Ovary (tissue), 10 donors: ENCODE measurements at regions of chr4 and their contacts with region 1.

Region 1: GRCh38 chr4:37977471-37978247 is 17.5 kb downstream of the PTTG2 start:
- DNase-seq: peak; percentile 63 to 80 (median 75)
- H3K4me3 ChIP-seq: peak overlapping the region; percentile 55
- H3K27ac ChIP-seq: peak overlapping the region; percentile 86 to 92
- H3K4me1 ChIP-seq: peaks cover 7% of the 10 kb centered on the region
- H3K27me3 ChIP-seq: no peaks in the 10 kb centered on the region
- CTCF ChIP-seq: peak; percentile 52 to 55 (median 53)
- EP300 ChIP-seq: no peak
- POLR2A ChIP-seq: peak; percentile 10

Region 2: GRCh38 chr4:37826295-37827029 is 151.2 kb before region 1 on chr4 and contains the start of gene PGM2:
- intact Hi-C with region 1: loop called in 2 of 4 experiments (anchors 10 kb)
- DNase-seq: peak; percentile 81 to 91 (median 86)
- H3K4me3 ChIP-seq: peak within 1 kb of the TSS; percentile 75
- H3K27ac ChIP-seq: peak within 1 kb of the TSS; percentile 59 to 82
- H3K4me1 ChIP-seq: peaks cover 8% of the 10 kb centered on the region
- H3K27me3 ChIP-seq: no peaks in the 10 kb centered on the region
- CTCF ChIP-seq: peak in 1 of 3 donors; percentile 16
- EP300 ChIP-seq: no peak
- POLR2A ChIP-seq: peak; percentile 52
- total RNA-seq, gene PGM2: 11.8 to 31.2 (median 22.2) TPM

Region 3: DNA sequence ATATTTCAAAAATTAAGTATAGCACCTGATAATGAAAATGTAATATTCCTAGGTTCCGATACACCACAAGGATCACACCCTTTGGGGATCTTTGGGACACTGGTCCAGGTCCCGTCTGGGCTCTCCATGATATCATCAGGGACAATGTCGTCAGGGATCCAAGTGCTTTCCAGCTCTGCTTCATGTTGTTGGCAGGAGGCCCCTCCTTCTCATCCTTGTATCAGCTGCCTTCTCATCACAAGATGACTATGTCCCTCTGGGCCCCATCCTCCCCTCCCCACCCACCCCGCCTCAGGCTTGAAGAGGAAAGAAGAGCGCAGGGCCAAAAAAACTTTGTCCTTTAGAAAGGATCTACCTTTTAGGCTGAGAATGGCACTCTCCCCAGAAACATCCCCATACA is 558.1 kb after region 1 on chr4:
- intact Hi-C with region 1: no loop called
- DNase-seq: no peak
- H3K4me3 ChIP-seq: no peak overlapping the region
- H3K27ac ChIP-seq: no peak overlapping the region
- H3K4me1 ChIP-seq: no peaks in the 10 kb centered on the region
- H3K27me3 ChIP-seq: no peaks in the 10 kb centered on the region
- CTCF ChIP-seq: no peak
- EP300 ChIP-seq: no peak
- POLR2A ChIP-seq: no peak